ENCODE measurements at regions of chr11 and their contacts with region 1.

Region 1: DNA sequence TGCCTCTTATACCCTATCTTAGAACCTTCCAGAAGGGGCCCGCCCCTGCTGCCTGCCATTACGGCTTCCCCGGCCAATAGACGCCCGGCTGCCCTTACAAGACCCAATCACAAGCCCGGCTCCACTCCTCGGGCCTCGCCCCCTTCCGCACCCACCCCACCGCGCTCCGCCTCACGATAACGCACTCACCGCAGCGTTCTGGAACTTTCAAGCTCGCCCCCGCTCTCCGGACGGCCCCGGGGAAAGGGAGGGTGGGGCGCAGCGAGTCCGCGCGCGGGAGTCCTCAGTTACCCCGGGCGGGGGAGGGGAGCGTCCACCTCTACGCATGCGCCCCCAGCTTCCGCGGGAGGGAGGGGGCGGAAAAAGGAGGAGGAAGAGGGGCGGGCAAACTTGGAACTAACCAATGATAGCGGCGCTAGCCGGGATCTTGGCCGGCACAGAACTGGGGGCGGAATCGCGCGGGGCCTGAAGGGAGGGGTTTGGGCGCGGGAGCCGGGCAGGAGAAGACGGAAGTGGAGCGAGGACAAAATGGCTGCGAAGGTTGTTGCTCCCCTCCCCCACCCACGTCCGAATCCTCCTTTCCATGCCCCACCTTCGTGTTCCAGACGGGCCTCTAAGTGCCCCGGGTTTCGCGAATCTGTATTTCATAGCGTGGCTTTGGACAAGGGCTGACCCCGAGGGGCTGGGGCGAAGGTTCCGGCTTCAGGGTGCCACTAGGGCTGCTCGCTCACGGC is 389 bp upstream of the HSPA8 start:
- DNase-seq: peak; percentile 94
- CTCF ChIP-seq: no peak

Region 2: DNA sequence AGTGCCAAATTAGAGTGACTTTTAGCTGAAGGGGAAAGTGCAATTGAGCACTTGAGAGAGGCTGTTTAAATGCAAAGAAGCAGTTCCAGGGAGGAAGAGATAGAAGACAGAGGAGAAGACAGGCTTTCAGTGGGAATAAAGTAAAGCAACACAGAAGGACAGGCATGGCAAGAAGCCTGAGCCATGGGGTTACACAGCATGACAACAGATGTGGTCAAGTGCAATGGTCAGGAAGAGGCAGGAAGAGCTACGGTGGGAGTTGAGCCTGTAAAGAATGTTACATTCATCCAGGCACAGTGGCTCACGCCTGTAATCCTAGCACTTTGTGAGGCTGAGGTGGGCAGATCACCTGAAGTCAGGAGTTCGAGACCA is 324.0 kb before region 1 on chr11:
- CTCF ChIA-PET with region 1: no interaction called
- POLR2A ChIA-PET with region 1: no interaction called
- DNase-seq: no peak
- CTCF ChIP-seq: no peak

Region 3: GRCh38 chr11:122910775-122911174 is 151.6 kb before region 1 on chr11:
- CTCF ChIA-PET with region 1: no interaction called
- POLR2A ChIA-PET with region 1: no interaction called
- DNase-seq: no peak
- CTCF ChIP-seq: peak; percentile 8

Region 4: GRCh38 chr11:123006860-123007542 is 55.3 kb before region 1 on chr11:
- CTCF ChIA-PET with region 1: no interaction called
- POLR2A ChIA-PET with region 1: no interaction called
- DNase-seq: no peak
- CTCF ChIP-seq: no peak

Region 5: DNA sequence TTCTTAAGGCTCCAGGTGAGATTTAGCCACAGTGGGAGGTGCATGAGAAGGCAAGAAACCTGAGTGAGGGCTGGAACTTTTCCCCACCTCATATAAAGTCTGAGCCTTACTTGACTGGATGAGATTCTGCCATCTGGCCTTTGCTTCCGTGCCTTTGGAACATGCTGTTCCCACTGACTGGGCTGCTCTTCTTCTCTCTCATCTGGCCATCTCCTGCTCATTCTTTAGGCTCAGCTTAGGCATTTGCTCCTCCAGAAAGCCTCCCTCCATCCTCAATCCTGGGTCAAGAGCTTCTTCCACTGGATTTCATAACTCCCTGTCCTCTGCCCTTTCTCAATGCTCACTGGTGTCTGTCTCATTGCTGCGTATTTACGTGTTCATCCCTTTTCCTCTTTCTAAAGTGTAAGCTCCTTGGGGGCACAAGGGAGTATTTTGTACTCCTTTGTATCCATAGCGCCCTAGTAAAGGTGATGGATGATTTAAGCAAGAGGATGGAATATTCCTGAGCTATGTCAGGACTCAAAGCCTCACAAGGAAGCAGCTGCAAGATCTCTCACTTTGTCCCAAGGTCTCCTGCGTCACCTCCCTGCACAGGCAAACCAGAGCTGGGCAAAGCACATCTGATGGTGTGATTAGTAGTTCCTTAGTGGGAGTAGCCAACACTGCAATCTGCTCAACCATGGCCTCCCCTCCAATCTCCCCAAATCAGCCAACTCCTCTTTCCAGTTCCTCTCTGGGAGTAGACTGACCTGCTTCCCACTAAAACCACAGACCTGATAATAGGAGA is 15.7 kb before region 1 on chr11:
- CTCF ChIA-PET with region 1: interaction called, 52 read pairs
- POLR2A ChIA-PET with region 1: interaction called, 22 read pairs
- DNase-seq: no peak
- CTCF ChIP-seq: no peak

Region 6: DNA sequence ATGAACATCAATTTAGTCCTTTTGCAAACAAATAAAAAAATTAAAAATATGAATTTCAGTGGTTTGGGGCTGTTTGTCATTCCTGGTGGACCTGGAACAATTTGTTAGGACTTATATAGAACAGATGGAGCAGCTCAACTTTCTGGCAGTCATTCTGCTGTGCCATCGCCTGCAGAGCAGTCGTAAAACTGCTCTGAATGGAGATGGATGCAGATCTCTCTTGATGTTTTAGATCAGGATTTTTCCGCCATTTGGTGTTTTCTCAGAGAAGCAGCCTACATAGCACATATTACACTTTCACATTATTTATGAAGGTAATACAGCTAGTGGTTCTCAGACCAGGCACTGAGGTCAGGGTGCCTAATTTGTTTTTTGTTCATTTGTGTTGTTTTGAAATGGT is 31.4 kb after region 1 on chr11:
- CTCF ChIA-PET with region 1: no interaction called
- POLR2A ChIA-PET with region 1: no interaction called
- DNase-seq: no peak
- CTCF ChIP-seq: no peak